ENCODE measurements at regions of chr10 and their contacts with region 1.

Region 1: GRCh38 chr10:128150045-128150493 is 23.8 kb upstream of the MKI67 start:
- DNase-seq: peak; percentile 70 to 85 (median 81)
- H3K4me3 ChIP-seq: peak overlapping the region in 1 of 2 donors; percentile 91
- H3K4me3 Mint-ChIP-seq: peak overlapping the region; percentile 60 to 78 (median 67)
- H3K27ac ChIP-seq: no peak overlapping the region
- H3K27ac Mint-ChIP-seq: peak overlapping the region in 1 of 7 donors; percentile 18
- H3K4me1 ChIP-seq: peaks cover 3% of the 10 kb centered on the region
- H3K4me1 Mint-ChIP-seq: peaks cover 4 to 15% (median 9%) of the 10 kb centered on the region in 4 donors
- H3K27me3 ChIP-seq: no peaks in the 10 kb centered on the region
- H3K27me3 Mint-ChIP-seq: peaks cover 2 to 3% of the 10 kb centered on the region in 2 donors

Region 2: DNA sequence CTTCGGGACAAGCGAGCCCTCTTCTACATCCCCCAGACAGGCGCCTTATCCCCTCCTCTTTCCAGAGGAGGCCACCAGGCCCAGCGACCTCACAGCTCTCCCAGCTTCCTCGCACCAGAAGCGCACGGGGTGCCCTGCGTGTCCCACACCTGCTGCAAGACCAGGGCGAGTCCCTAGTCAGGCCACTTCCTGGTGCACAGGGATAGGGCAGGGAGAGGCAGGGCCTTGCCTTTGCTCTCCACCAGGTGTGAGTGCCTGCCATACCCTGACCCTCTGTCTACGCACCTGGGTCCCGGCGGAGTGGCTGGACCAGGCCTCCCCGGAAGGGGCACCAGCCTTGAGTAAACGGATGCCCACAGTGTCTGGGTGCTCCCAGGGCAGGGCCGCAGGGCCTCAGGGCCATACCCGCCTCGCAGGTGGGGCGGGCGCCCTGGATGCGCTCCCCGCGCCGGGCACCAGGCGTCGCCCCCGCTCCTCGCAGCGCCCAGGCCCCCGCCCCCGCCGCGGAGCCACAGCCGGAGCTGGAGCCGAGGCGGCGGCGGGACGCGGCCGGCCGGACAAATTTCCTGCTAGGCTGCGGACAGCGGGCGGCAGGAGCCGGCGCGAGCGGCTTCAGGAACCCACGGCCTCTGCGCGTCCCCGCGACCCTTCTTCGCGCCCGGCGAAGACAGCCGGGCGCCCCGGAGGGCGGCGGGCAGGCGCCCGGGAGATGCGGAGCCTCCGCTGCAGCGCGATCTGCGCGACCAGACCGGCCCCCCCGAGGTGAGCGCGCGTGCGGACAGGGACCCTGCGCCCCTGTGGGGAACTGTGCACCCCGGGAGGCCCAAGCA is 243.3 kb before region 1 on chr10 and contains the start of gene PTPRE:
- CTCF ChIA-PET with region 1: interaction called, 4 read pairs
- POLR2A ChIA-PET with region 1: no interaction called
- intact Hi-C with region 1: loop called (anchors 1 kb)
- DNase-seq: peak in 4 of 5 donors; percentile 59 to 67 (median 66)
- H3K4me3 ChIP-seq: no peak within 1 kb of the TSS
- H3K4me3 Mint-ChIP-seq: peak within 1 kb of the TSS in 7 of 8 donors; percentile 33 to 68 (median 42)
- H3K27ac ChIP-seq: no peak within 1 kb of the TSS
- H3K27ac Mint-ChIP-seq: no peak within 1 kb of the TSS
- H3K4me1 ChIP-seq: no peaks in the 10 kb centered on the region
- H3K4me1 Mint-ChIP-seq: no peaks in the 10 kb centered on the region
- H3K27me3 ChIP-seq: peaks cover 5% of the 10 kb centered on the region
- H3K27me3 Mint-ChIP-seq: peaks cover 21 to 34% of the 10 kb centered on the region in 2 donors
- total RNA-seq, gene PTPRE: 24.4 to 27.6 TPM

Region 3: GRCh38 chr10:128078136-128078969 is 71.7 kb before region 1 on chr10:
- CTCF ChIA-PET with region 1: interaction called, 91 read pairs
- POLR2A ChIA-PET with region 1: no interaction called
- intact Hi-C with region 1: loop called (anchors 1 kb)
- DNase-seq: peak in 3 of 5 donors; percentile 35 to 36 (median 35)
- H3K4me3 ChIP-seq: no peak overlapping the region
- H3K4me3 Mint-ChIP-seq: no peak overlapping the region
- H3K27ac ChIP-seq: no peak overlapping the region
- H3K27ac Mint-ChIP-seq: no peak overlapping the region
- H3K4me1 ChIP-seq: no peaks in the 10 kb centered on the region
- H3K4me1 Mint-ChIP-seq: peaks cover 4 to 8% (median 8%) of the 10 kb centered on the region in 4 donors
- H3K27me3 ChIP-seq: no peaks in the 10 kb centered on the region
- H3K27me3 Mint-ChIP-seq: no peaks in the 10 kb centered on the region

Region 4: DNA sequence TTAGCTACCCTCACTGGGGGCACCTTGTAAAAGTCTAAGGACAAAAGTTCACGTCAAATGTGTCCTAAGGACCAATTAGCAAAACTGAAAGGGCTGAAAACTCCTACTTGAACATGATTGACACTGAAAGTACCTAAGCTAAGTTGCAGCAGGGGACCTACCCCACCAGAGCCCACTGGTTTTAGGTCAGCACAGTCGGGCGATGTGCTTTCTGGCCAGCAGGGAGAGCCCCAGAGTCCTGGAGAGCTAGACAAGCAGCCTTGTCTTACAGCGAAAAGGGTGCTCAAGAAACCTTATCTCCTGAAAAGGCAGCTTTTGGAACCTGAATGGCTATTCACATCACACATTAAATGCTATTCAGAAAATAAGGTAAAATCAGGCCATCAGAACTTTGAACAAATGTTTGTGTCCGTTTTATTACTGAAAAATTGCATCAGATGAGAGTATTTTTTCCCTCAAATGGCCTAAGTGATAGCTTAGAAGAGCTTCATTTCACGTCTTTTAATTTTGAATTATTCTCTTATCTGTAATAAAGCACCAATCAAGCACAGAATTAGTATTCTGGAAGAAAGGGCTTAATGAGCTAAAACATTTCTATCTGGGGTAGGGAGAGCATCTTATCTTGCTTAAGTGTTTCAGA is 28.4 kb after region 1 on chr10:
- CTCF ChIA-PET with region 1: interaction called, 13 read pairs
- POLR2A ChIA-PET with region 1: no interaction called
- intact Hi-C with region 1: no loop called
- DNase-seq: peak in 4 of 5 donors; percentile 29 to 46 (median 40)
- H3K4me3 ChIP-seq: no peak overlapping the region
- H3K4me3 Mint-ChIP-seq: peak overlapping the region in 1 of 8 donors; percentile 26
- H3K27ac ChIP-seq: no peak overlapping the region
- H3K27ac Mint-ChIP-seq: peak overlapping the region in 1 of 7 donors; percentile 50
- H3K4me1 ChIP-seq: peaks cover 28% of the 10 kb centered on the region
- H3K4me1 Mint-ChIP-seq: peaks cover 21 to 41% (median 30%) of the 10 kb centered on the region in 4 donors
- H3K27me3 ChIP-seq: no peaks in the 10 kb centered on the region
- H3K27me3 Mint-ChIP-seq: peaks cover 0 to 1% of the 10 kb centered on the region in 2 donors

Region 5: GRCh38 chr10:128211953-128212727 is 62.1 kb after region 1 on chr10:
- CTCF ChIA-PET with region 1: interaction called, 6 read pairs
- POLR2A ChIA-PET with region 1: no interaction called
- intact Hi-C with region 1: loop called (anchors 2 kb)
- DNase-seq: peak; percentile 78 to 85 (median 80)
- H3K4me3 ChIP-seq: peak overlapping the region in 1 of 2 donors; percentile 43
- H3K4me3 Mint-ChIP-seq: peak overlapping the region; percentile 85 to 96 (median 90)
- H3K27ac ChIP-seq: no peak overlapping the region
- H3K27ac Mint-ChIP-seq: peak overlapping the region; percentile 89 to 95 (median 93)
- H3K4me1 ChIP-seq: peaks cover 22% of the 10 kb centered on the region
- H3K4me1 Mint-ChIP-seq: peaks cover 9 to 24% (median 18%) of the 10 kb centered on the region in 4 donors
- H3K27me3 ChIP-seq: no peaks in the 10 kb centered on the region
- H3K27me3 Mint-ChIP-seq: no peaks in the 10 kb centered on the region

Region 6: GRCh38 chr10:128411624-128412023 is 261.6 kb after region 1 on chr10:
- CTCF ChIA-PET with region 1: no interaction called
- POLR2A ChIA-PET with region 1: no interaction called
- intact Hi-C with region 1: no loop called
- DNase-seq: no peak
- H3K4me3 ChIP-seq: no peak overlapping the region
- H3K4me3 Mint-ChIP-seq: no peak overlapping the region
- H3K27ac ChIP-seq: no peak overlapping the region
- H3K27ac Mint-ChIP-seq: no peak overlapping the region
- H3K4me1 ChIP-seq: no peaks in the 10 kb centered on the region
- H3K4me1 Mint-ChIP-seq: no peaks in the 10 kb centered on the region
- H3K27me3 ChIP-seq: no peaks in the 10 kb centered on the region
- H3K27me3 Mint-ChIP-seq: peaks cover 0 to 5% of the 10 kb centered on the region in 2 donors

Region 7: DNA sequence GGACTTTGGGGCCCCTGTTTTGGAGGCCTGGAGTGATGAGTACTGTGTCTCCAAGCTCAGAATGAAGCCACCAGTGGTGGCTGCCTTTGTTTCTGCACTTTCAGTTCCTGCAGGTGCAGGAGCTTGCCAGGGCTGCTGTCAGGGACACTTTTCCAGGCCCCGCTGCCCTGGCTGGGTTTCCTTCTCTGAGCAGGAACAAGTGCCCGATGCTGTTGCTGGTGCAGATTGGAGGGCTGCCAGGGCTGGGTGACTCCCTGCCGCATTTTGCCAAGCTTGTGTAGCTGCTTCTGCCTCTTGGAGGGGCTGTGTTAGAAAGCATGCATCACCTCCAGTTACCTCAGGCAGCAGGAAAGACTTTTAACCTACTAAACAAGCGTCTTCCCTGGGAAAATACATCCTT is 1528.1 kb after region 1 on chr10:
- CTCF ChIA-PET with region 1: no interaction called
- POLR2A ChIA-PET with region 1: no interaction called
- intact Hi-C with region 1: no loop called
- DNase-seq: no peak
- H3K4me3 ChIP-seq: no peak overlapping the region
- H3K4me3 Mint-ChIP-seq: no peak overlapping the region
- H3K27ac ChIP-seq: no peak overlapping the region
- H3K27ac Mint-ChIP-seq: no peak overlapping the region
- H3K4me1 ChIP-seq: no peaks in the 10 kb centered on the region
- H3K4me1 Mint-ChIP-seq: peaks cover 0 to 4% (median 2%) of the 10 kb centered on the region in 4 donors
- H3K27me3 ChIP-seq: no peaks in the 10 kb centered on the region
- H3K27me3 Mint-ChIP-seq: no peaks in the 10 kb centered on the region

Measured in CD4-positive, alpha-beta memory T cell (primary cell).